ENCODE measurements at regions of chr3 and their contacts with region 1.

Region 1: DNA sequence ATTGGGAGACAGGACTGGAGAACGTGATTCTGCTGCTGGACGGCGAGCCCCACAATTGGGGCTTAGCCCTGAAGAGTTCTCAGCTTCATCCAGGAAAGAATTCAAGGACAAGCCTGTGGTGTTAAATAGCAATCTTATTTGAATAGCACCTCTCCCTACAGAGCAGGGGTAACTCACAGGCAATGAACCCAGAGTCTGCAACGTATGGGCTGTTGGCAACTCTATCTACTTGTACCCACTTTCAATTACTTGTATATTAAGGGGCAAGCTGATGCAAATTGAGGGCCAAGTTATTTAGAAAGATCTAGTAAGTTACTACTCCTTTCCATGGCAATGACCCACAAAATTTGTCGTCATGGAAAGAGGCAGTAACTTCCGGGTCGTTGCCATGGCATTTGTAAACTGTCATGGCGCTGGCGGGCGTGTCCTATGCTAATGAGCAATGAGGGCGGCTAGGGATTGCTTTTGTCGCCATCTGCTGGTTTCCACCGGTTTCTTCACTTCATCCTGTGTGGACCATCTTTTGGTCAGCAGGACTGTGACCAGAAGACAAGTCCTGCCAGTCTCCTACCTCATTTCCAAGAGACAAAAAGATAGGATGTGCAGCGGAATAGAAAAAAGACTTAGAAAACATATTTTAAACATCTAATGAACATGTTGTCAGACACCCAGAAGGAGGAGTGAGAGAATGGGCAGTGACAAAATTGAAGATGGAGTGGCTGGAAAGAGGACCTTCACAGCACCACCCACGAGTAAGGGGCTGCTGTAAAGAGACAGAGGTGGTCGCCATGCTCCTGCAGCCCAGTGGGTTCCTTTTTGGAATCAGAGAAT is 45.8 kb upstream of the SH3BP5 start:
- DNase-seq: peak; percentile 96
- H3K4me3 ChIP-seq: no peak overlapping the region
- H3K27ac ChIP-seq: peak overlapping the region; percentile 71
- H3K4me1 ChIP-seq: peaks cover 2% of the 10 kb centered on the region
- H3K27me3 ChIP-seq: no peaks in the 10 kb centered on the region
- CTCF ChIP-seq: peak; percentile 81 to 91
- POLR2A ChIP-seq: no peak

Region 2: GRCh38 chr3:14847613-14848541 is 530.3 kb before region 1 on chr3:
- CTCF ChIA-PET with region 1: no interaction called
- POLR2A ChIA-PET with region 1: no interaction called
- dilution Hi-C with region 1: no loop called
- intact Hi-C with region 1: no loop called
- DNase-seq: peak; percentile 43
- H3K4me3 ChIP-seq: no peak overlapping the region
- H3K27ac ChIP-seq: peak overlapping the region; percentile 10
- H3K4me1 ChIP-seq: peaks cover 23% of the 10 kb centered on the region
- H3K27me3 ChIP-seq: no peaks in the 10 kb centered on the region
- CTCF ChIP-seq: no peak
- POLR2A ChIP-seq: no peak

Region 3: DNA sequence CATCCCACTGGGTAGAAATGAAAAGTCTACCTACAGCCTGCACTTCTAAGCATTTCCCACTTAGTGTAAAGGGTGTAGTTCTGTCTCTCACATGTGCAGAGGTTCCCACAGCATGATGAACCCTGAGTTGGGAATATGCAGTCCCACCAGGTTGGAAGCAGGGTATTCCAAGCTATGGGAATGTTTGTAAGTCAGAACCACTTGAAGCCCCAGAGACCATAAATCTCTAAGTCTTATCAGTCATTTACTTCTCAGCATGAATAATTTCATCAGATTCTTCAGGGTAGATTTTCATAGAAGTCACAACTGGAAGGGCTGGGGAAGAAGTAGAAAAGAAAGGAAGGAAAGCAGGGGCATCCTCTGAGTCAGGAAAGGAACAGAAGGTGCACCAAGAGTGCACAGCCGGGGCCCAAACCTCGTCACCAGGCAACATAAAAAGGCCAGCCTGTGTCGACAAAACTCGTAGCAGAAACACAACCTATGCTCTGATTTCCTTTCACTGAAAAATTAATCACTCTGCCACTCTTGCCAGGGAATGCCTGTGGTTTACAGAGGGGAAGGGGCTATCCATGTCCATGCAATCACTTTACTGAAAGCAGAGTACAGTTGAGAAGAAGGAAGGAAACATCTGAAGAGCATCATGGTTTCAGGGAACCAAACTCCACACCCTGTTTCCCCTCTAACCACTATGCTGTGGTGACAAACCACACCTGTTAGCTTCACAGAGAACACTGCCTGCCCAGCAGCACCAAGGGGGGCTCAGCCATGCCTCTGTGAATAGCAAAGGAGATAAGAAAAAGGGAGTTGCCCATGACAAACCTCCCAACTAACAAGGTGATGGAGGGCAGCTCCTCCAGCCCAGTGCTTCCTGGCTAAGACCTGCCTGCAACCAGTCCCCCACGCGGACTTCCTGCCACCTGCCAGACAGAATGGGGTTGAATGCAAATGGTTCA is 86.3 kb before region 1 on chr3:
- CTCF ChIA-PET with region 1: no interaction called
- POLR2A ChIA-PET with region 1: no interaction called
- dilution Hi-C with region 1: no loop called
- intact Hi-C with region 1: loop called (anchors 1 kb)
- DNase-seq: peak; percentile 77
- H3K4me3 ChIP-seq: no peak overlapping the region
- H3K27ac ChIP-seq: peak overlapping the region; percentile 85
- H3K4me1 ChIP-seq: peaks cover 51% of the 10 kb centered on the region
- H3K27me3 ChIP-seq: no peaks in the 10 kb centered on the region
- CTCF ChIP-seq: no peak
- POLR2A ChIP-seq: no peak

Region 4: GRCh38 chr3:15300323-15301078 is 77.7 kb before region 1 on chr3:
- CTCF ChIA-PET with region 1: no interaction called
- POLR2A ChIA-PET with region 1: no interaction called
- dilution Hi-C with region 1: no loop called
- intact Hi-C with region 1: loop called (anchors 1 kb)
- DNase-seq: peak; percentile 94
- H3K4me3 ChIP-seq: no peak overlapping the region
- H3K27ac ChIP-seq: peak overlapping the region; percentile 75
- H3K4me1 ChIP-seq: peaks cover 41% of the 10 kb centered on the region
- H3K27me3 ChIP-seq: no peaks in the 10 kb centered on the region
- CTCF ChIP-seq: no peak
- POLR2A ChIP-seq: no peak

Region 5: DNA sequence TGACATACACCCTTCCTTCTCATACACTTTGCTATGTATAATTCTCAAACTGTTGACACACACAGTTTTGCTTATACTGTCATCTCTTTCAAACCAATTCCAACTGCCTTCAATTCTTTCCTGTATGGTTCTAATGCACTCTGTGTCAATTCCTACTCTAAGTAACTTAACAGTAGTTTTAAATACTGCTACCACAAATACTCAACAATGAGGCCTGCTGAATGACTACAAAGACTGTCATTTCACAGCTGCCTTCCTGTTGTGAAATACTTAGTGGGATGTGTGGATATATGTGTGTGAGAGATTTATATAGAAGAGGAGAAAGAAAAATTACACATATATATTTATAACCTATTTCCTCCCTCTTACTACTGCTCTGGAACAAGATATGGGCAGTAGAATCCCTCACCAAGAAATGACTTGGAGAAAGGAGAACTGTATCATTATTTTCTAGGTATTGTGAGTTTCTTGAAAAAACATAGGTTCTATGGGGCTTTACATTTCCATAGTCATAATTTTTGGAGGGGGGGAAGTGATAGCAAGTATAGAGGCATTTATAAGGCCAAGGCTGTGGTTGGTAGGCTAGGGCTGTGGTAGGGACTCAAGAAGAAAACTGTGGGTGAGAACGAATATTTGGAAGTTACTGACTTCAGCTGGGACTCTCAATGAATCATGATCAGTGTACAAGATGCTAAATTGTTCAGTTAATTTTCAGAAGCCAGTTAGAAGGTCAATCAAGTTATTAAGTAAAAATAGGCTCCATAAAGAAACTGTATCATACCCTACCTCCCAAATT is 330.9 kb after region 1 on chr3:
- CTCF ChIA-PET with region 1: no interaction called
- POLR2A ChIA-PET with region 1: no interaction called
- dilution Hi-C with region 1: no loop called
- intact Hi-C with region 1: no loop called
- DNase-seq: peak; percentile 39
- H3K4me3 ChIP-seq: no peak overlapping the region
- H3K27ac ChIP-seq: no peak overlapping the region
- H3K4me1 ChIP-seq: no peaks in the 10 kb centered on the region
- H3K27me3 ChIP-seq: no peaks in the 10 kb centered on the region
- CTCF ChIP-seq: no peak
- POLR2A ChIP-seq: no peak

Measured in endothelial cell of umbilical vein (primary cell).